Panc1 (cell line): ENCODE measurements at regions of chr5 and their contacts with region 1.

Region 1: DNA sequence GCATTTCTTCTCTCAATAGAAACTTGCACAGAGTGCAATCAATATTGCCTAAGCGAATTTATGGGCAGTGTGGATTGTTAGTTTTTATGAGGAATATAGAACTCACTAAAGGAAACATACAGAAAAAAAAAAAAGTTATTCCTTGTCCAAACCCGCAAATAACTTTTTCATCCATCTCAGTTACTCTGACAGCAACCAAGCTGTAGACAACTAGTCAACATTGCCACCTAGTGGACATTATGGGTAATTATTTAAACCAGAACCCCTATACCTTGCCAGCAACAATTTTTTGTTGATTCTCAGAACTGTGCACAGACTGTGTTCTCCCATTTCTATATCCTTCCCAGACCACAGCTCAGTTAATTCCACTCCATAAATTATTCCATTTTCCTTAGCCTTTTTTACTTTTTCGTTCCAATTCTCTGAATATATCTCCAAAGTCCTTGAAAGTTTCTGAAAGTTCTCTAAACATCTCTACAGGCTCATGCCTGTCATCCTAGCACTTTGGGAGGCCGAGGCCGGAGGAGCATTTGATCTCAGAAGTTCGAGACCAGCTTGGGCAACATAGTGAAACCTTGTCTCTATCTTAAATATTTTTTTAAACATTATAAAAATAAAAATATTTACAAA is 2.6 kb upstream of the AFAP1L1 start:
- DNase-seq: no peak
- ATAC-seq: no peak
- H3K4me3 ChIP-seq: no peak overlapping the region
- H3K27ac ChIP-seq: no peak overlapping the region
- H3K4me1 ChIP-seq: peaks cover 10% of the 10 kb centered on the region; the same call in 1 of the 2 replicates
- H3K27me3 ChIP-seq: no peaks in the 10 kb centered on the region
- CTCF ChIP-seq: peak; percentile 78

Region 2: GRCh38 chr5:148826053-148826738 is 442.8 kb before region 1 on chr5 and contains the start of gene ADRB2:
- CTCF ChIA-PET with region 1: no interaction called
- POLR2A ChIA-PET with region 1: no interaction called
- in situ Hi-C with region 1: no loop called
- intact Hi-C with region 1: no loop called
- DNase-seq: peak; percentile 71
- ATAC-seq: peak; percentile 98
- H3K4me3 ChIP-seq: peak within 1 kb of the TSS; percentile 56 to 86
- H3K27ac ChIP-seq: no peak within 1 kb of the TSS; the same call in 1 of the 2 replicates
- H3K4me1 ChIP-seq: peaks cover 10% of the 10 kb centered on the region; the same call in 1 of the 2 replicates
- H3K27me3 ChIP-seq: no peaks in the 10 kb centered on the region; the same call in 1 of the 2 replicates
- CTCF ChIP-seq: no peak
- total RNA-seq, gene ADRB2: 1.0 TPM

Region 3: GRCh38 chr5:149053072-149053695 is 215.9 kb before region 1 on chr5:
- CTCF ChIA-PET with region 1: interaction called, 3 read pairs
- POLR2A ChIA-PET with region 1: no interaction called
- in situ Hi-C with region 1: no loop called
- intact Hi-C with region 1: loop called (anchors 10 kb)
- DNase-seq: no peak
- ATAC-seq: no peak
- H3K4me3 ChIP-seq: no peak overlapping the region
- H3K27ac ChIP-seq: no peak overlapping the region
- H3K4me1 ChIP-seq: no peaks in the 10 kb centered on the region
- H3K27me3 ChIP-seq: no peaks in the 10 kb centered on the region
- CTCF ChIP-seq: no peak

Region 4: GRCh38 chr5:149133795-149134780 is 135.0 kb before region 1 on chr5:
- CTCF ChIA-PET with region 1: interaction called, 5 read pairs
- POLR2A ChIA-PET with region 1: no interaction called
- in situ Hi-C with region 1: loop called (anchors 25 kb)
- intact Hi-C with region 1: loop called (anchors 5 kb)
- DNase-seq: no peak
- ATAC-seq: peak; percentile 93
- H3K4me3 ChIP-seq: no peak overlapping the region
- H3K27ac ChIP-seq: peak overlapping the region; percentile 2; the same call in 1 of the 2 replicates
- H3K4me1 ChIP-seq: peaks cover 7% of the 10 kb centered on the region; the same call in 1 of the 2 replicates
- H3K27me3 ChIP-seq: no peaks in the 10 kb centered on the region
- CTCF ChIP-seq: no peak

Region 5: DNA sequence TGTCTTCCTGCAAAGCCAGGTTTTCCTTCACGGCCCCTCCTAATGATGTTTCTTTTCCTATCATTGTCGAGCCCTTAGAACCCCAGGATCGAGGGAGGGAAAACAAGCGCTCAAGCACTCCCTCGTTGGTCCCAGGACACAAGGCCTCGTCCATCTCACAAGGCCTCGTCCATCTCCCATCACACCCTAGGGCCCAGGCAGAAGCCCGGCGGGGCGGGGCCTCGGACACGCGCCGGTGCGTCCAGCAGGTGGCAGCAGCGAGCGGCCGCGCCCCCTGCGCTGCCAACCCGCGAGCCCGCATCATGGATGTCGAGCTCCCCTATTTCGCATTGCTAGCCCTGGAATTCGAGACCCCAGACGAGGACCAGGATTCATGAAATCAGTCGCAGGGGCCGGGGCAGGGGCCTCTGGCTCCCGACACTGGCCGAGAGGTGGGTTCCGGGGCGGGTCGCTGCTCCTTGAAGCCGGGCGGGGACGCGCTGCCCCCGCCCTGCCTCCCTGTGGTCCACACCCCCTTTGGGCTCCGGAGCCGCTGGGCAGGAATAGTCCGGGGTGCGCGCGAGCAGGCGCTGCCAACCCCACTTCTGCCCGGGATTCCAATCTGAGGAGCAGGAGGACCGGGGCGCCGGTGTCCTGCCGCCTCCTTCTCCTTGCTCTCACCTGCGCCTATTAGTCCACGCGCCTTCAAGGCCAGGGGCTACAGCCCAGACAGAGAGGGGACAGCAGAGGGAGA is 127.7 kb before region 1 on chr5 and contains the start of gene ABLIM3:
- CTCF ChIA-PET with region 1: interaction called, 3 read pairs
- POLR2A ChIA-PET with region 1: no interaction called
- in situ Hi-C with region 1: loop called (anchors 25 kb)
- intact Hi-C with region 1: no loop called
- DNase-seq: no peak
- ATAC-seq: peak; percentile 91
- H3K4me3 ChIP-seq: peak within 1 kb of the TSS; percentile 65 to 74
- H3K27ac ChIP-seq: peak within 1 kb of the TSS; percentile 54
- H3K4me1 ChIP-seq: 0 out of 2 replicates have a peak, but pooled peaks cover 4% of the 10 kb centered on the region
- H3K27me3 ChIP-seq: no peaks in the 10 kb centered on the region
- CTCF ChIP-seq: peak; percentile 98
- total RNA-seq, gene ABLIM3: 12.9 TPM

Region 6: DNA sequence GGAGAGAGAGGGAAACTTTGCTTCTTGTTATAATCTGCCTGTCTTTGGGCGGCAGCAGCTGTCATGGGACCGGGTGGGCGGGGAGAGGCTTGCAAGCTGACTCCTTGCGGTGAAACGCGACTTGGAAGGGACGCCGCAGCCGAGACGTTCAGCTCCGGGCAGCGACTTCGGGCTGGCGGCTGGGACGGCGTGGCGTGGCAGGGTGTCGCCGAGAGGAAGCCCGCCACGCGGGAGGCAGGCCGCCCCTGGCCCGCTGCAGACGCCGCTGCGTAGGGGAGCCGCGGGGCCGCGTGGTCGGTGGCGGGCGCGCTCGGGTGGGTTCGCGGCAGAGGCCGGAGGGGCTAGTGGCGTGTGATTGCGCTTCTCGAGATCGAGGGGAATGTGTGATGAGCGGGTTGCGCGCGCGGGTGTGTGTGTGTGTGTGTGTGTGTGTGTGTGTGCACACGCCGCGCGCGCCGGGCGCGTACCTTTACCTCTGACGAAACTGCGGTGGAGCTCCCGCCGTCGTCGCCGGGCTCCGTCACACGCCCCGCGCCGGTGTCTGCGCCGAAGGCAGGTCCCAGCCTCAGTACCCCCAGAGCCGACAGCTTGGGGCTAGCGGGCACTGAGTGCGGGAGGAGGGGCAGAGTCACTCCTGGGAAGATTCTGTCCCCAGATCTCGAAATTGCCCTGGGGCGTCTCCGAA is 462.7 kb after region 1 on chr5:
- CTCF ChIA-PET with region 1: no interaction called
- POLR2A ChIA-PET with region 1: no interaction called
- in situ Hi-C with region 1: no loop called
- intact Hi-C with region 1: no loop called
- DNase-seq: peak; percentile 48
- ATAC-seq: peak; percentile 77
- H3K4me3 ChIP-seq: peak overlapping the region; percentile 76 to 81
- H3K27ac ChIP-seq: peak overlapping the region; percentile 68
- H3K4me1 ChIP-seq: peaks cover 9% of the 10 kb centered on the region; the same call in 1 of the 2 replicates
- H3K27me3 ChIP-seq: no peaks in the 10 kb centered on the region
- CTCF ChIP-seq: no peak